Endothelial cell of umbilical vein (primary cell): ENCODE measurements at regions of chr1 and their contacts with region 1.

Region 1: DNA sequence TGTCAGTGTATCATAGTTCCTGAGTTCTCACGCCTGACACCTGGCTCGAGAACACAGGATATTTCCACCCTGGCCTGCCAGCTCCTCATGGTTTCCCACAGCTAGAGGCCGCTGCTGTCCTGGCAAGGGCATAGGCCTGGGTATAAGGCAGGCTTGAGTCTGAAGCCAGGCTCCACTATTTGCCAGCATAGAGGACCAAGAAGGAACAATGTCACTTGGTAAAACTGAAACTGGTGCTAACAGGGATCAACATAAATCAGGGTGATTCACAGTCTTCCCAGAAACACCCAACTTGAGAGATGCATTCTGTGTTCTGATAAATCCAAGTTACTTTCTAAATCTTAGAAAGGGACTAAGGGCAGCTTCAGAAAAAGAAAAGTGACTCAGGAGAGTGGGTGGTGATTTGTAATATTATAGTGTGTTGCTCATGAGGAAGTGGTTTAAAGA is 6.9 kb upstream of the S100A2 start:
- DNase-seq: peak; percentile 93
- H3K4me3 ChIP-seq: no peak overlapping the region
- H3K27ac ChIP-seq: no peak overlapping the region
- H3K4me1 ChIP-seq: peaks cover 15% of the 10 kb centered on the region
- H3K27me3 ChIP-seq: no peaks in the 10 kb centered on the region
- CTCF ChIP-seq: peak; percentile 89 to 96
- POLR2A ChIP-seq: no peak

Region 2: DNA sequence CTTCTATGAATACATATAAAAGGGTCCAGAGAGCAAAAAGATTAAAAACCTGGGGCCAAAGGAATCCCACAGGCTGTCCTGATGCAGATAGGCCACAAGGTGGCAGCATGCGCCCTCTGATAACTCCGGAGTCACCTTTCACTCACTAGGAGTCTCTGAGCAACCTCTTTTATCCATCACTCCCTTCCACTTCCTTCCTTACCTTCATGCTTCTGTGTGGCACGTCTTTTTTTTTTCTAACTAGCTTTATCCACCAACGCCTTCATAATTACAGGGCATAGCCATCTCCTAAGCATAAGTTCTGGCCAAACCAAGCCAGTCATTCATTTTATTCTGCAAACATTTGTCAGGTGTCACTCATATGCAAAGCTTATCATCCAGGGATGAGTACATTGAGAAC is 220.1 kb before region 1 on chr1:
- CTCF ChIA-PET with region 1: interaction called, 5 read pairs
- POLR2A ChIA-PET with region 1: no interaction called
- dilution Hi-C with region 1: no loop called
- intact Hi-C with region 1: loop called (anchors 2 kb)
- DNase-seq: peak; percentile 54
- H3K4me3 ChIP-seq: no peak overlapping the region
- H3K27ac ChIP-seq: no peak overlapping the region
- H3K4me1 ChIP-seq: no peaks in the 10 kb centered on the region
- H3K27me3 ChIP-seq: no peaks in the 10 kb centered on the region
- CTCF ChIP-seq: peak; percentile 85 to 86
- POLR2A ChIP-seq: no peak

Region 3: GRCh38 chr1:153526132-153526543 is 46.5 kb before region 1 on chr1:
- CTCF ChIA-PET with region 1: interaction called, 216 read pairs
- POLR2A ChIA-PET with region 1: no interaction called
- dilution Hi-C with region 1: no loop called
- intact Hi-C with region 1: no loop called
- DNase-seq: no peak
- H3K4me3 ChIP-seq: no peak overlapping the region
- H3K27ac ChIP-seq: no peak overlapping the region
- H3K4me1 ChIP-seq: peaks cover 3% of the 10 kb centered on the region
- H3K27me3 ChIP-seq: no peaks in the 10 kb centered on the region
- CTCF ChIP-seq: no peak
- POLR2A ChIP-seq: no peak

Region 4: DNA sequence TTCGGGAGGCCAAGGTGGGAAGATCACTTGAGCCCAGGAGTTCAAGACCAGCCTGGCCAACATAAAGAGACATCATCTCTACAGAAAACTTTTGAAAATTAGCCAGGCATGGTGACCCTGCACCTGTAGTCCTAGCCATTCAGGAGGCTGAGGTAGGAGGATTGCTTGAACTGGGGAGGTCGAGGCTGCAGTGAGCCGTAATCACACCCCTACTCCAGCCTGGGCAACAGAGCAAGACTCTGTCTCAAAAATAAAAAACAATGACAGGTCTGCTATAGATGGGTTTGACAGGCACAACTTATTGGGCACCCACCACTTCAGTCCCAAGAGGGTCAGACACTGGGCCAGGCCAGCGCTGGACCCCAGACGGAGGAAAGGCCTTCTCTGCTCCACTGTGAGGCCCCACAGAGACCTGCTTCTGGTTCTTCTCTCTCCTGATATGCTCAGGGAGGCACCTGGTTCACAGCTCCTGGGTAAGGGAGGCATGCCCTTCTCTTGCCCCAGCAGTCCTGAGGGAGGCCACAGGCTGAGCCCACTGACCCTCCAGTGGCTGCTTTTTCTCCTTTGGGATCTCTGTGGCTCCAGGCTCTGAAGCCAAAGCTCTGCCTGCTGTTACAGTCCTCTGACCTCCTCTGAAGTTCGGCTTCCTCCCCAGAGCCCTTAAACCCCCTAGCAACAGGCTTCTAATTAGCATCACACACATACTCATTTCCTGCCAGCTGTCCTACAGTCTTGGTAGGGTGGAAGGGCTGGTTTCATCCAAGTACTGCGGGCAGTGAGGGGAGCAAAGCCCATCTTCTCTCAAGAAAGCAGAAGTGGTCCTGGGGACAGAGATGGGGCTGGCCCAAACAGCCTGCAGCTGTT is 25.9 kb after region 1 on chr1:
- CTCF ChIA-PET with region 1: interaction called, 19 read pairs
- POLR2A ChIA-PET with region 1: no interaction called
- dilution Hi-C with region 1: no loop called
- intact Hi-C with region 1: loop called (anchors 2 kb)
- DNase-seq: peak; percentile 78
- H3K4me3 ChIP-seq: no peak overlapping the region
- H3K27ac ChIP-seq: peak overlapping the region; percentile 54
- H3K4me1 ChIP-seq: peaks cover 14% of the 10 kb centered on the region
- H3K27me3 ChIP-seq: no peaks in the 10 kb centered on the region
- CTCF ChIP-seq: no peak
- POLR2A ChIP-seq: no peak

Region 5: GRCh38 chr1:153626922-153627796 is 54.6 kb after region 1 on chr1 and contains the start of gene S100A13:
- CTCF ChIA-PET with region 1: interaction called, 145 read pairs
- POLR2A ChIA-PET with region 1: interaction called, 13 read pairs
- dilution Hi-C with region 1: no loop called
- intact Hi-C with region 1: loop called (anchors 1 kb)
- DNase-seq: peak; percentile 90
- H3K4me3 ChIP-seq: peak within 1 kb of the TSS; percentile 57 to 74 (median 62)
- H3K27ac ChIP-seq: peak within 1 kb of the TSS; percentile 81
- H3K4me1 ChIP-seq: peaks cover 14% of the 10 kb centered on the region
- H3K27me3 ChIP-seq: no peaks in the 10 kb centered on the region
- CTCF ChIP-seq: peak; percentile 93
- POLR2A ChIP-seq: peak; percentile 98
- total RNA-seq, gene S100A13: 155 and 255 TPM in 2 replicates

Region 6: GRCh38 chr1:153658400-153659174 is 86.0 kb after region 1 on chr1 and contains the start of gene SNAPIN:
- CTCF ChIA-PET with region 1: interaction called, 13 read pairs
- POLR2A ChIA-PET with region 1: no interaction called
- dilution Hi-C with region 1: no loop called
- intact Hi-C with region 1: loop called (anchors 1 kb)
- DNase-seq: peak; percentile 83
- H3K4me3 ChIP-seq: peak within 1 kb of the TSS; percentile 79 to 91 (median 83)
- H3K27ac ChIP-seq: peak within 1 kb of the TSS; percentile 64
- H3K4me1 ChIP-seq: peaks cover 7% of the 10 kb centered on the region
- H3K27me3 ChIP-seq: no peaks in the 10 kb centered on the region
- CTCF ChIP-seq: peak in 1 of 2 donors; percentile 21
- POLR2A ChIP-seq: peak; percentile 82
- total RNA-seq, gene SNAPIN: 36.5 and 36.8 TPM in 2 replicates

Region 7: GRCh38 chr1:153688276-153688675 is 115.7 kb after region 1 on chr1:
- CTCF ChIA-PET with region 1: no interaction called
- POLR2A ChIA-PET with region 1: no interaction called
- dilution Hi-C with region 1: no loop called
- intact Hi-C with region 1: no loop called
- DNase-seq: no peak
- H3K4me3 ChIP-seq: no peak overlapping the region
- H3K27ac ChIP-seq: no peak overlapping the region
- H3K4me1 ChIP-seq: no peaks in the 10 kb centered on the region
- H3K27me3 ChIP-seq: no peaks in the 10 kb centered on the region
- CTCF ChIP-seq: no peak
- POLR2A ChIP-seq: no peak

Region 8: DNA sequence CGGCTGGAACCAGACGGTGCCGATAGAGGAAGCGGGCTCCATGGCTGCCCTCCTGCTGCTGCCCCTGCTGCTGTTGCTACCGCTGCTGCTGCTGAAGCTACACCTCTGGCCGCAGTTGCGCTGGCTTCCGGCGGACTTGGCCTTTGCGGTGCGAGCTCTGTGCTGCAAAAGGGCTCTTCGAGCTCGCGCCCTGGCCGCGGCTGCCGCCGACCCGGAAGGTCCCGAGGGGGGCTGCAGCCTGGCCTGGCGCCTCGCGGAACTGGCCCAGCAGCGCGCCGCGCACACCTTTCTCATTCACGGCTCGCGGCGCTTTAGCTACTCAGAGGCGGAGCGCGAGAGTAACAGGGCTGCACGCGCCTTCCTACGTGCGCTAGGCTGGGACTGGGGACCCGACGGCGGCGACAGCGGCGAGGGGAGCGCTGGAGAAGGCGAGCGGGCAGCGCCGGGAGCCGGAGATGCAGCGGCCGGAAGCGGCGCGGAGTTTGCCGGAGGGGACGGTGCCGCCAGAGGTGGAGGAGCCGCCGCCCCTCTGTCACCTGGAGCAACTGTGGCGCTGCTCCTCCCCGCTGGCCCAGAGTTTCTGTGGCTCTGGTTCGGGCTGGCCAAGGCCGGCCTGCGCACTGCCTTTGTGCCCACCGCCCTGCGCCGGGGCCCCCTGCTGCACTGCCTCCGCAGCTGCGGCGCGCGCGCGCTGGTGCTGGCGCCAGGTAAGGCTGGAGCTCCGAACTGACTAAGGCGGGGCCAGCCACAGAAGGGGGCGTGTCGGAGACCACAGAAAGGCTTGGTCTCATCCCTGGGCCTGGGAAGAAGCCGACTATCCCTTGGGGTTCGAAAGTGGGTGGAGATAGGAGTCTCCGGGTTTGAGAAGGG is 203.1 kb after region 1 on chr1:
- CTCF ChIA-PET with region 1: interaction called, 15 read pairs
- POLR2A ChIA-PET with region 1: no interaction called
- dilution Hi-C with region 1: no loop called
- intact Hi-C with region 1: loop called (anchors 1 kb)
- DNase-seq: peak; percentile 58
- H3K4me3 ChIP-seq: peak overlapping the region; percentile 25 to 63 (median 49)
- H3K27ac ChIP-seq: no peak overlapping the region
- H3K4me1 ChIP-seq: peaks cover 54% of the 10 kb centered on the region
- H3K27me3 ChIP-seq: no peaks in the 10 kb centered on the region
- CTCF ChIP-seq: no peak
- POLR2A ChIP-seq: no peak